Left cardiac atrium (tissue), 4 donors: ENCODE measurements at regions of chr10 and their contacts with region 1.

Region 1: DNA sequence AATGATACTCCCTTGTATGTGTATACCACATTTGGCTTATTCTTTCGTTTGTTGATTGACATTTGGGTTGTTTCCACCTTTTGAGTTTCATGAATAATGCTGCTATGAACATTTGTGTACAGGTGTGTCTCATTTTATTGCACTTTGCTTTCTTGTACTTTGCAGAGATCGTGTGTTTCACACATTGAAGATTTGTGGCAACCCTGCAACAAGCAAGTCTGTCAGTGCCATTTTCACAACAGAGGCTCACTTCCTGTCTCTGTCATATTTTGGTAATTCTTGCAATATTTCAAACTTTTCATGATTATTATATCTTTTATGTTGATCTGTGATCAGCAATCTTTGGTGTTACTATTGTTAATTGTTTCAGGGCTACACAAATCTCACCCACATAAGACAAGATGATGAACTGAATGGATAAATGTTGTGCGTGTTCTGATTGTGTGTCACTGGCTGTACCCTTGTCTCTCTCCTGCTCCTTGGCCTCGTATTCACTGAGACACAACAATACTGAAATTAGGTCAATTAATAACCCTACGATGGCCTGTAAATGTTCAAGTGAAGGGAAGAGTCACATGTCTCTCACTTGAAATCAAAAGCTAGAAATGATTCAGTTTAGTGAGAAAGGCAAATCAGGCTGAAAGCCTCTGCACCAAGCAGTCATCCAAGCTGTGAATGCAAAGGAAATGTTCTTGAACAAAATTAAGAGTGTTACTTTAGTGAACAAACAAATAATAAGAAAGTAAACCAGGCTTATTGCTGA is 133.6 kb upstream of the JCAD start:
- DNase-seq: no peak
- ATAC-seq: no peak

Region 2: GRCh38 chr10:30027057-30028005 is 165.7 kb before region 1 on chr10:
- intact Hi-C with region 1: loop called in 1 of 2 experiments (anchors 5 kb)
- DNase-seq: peak; percentile 72
- ATAC-seq: peak; percentile 71 to 79

Region 3: DNA sequence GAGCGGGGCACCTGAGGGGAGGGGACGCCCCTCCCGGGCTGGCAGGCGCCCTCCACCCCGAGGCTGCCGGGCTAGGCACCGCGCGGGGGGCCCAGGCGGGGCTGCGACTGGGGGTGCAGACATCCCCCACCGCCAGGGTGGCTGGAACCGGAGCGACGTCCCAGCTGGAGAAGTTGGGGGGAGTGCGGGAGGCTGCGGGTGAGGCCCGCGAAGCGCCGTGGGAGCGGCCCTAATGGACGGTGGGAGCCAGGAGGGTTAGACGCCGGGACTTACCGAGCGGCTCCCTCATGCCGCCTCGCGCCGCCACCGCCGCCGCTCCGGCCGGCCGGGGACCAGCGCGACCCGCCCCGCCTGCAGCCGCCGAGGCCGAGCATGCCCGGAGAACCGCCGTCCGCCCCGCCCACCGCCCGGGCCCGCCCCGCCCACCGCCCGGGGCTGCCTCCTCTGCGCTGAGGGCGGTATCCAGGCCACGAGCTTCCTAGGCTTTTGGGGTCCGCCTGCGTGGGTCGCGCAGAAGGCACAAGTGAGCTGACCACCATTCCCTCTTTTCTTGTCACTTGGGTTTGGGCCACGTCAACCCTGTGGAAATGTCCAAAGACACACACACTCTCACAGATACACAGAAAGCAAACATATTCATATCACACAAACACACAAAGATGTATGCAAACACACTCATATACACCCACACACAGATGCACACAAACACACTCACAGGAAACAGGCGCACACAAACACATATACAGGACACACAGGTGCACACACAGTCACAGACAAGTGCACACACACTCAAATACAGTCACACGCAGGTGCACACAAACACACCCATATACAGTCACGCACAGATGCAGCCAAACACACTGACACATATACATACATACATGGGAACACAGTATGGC is 133.6 kb before region 1 on chr10 and contains the start of gene JCAD:
- intact Hi-C with region 1: no loop called
- DNase-seq: peak; percentile 84
- ATAC-seq: peak; percentile 93 to 96
- total RNA-seq, gene JCAD: 44.6 to 52.8 TPM